Right cardiac atrium (tissue), 5 donors: ENCODE measurements at regions of chr3 and their contacts with region 1.

Region 1: GRCh38 chr3:115147329-115148141 is 447 bp upstream of the ZBTB20 start:
- DNase-seq: peak; percentile 98 to 99 (median 99)
- ATAC-seq: peak; percentile 95 to 96
- H3K4me3 ChIP-seq: peak overlapping the region; percentile 97
- H3K27ac ChIP-seq: peak overlapping the region; percentile 83
- H3K4me1 ChIP-seq: no peaks in the 10 kb centered on the region
- H3K27me3 ChIP-seq: no peaks in the 10 kb centered on the region

Region 2: GRCh38 chr3:115092220-115092791 is 55.2 kb before region 1 on chr3:
- intact Hi-C with region 1: loop called in 3 of 4 experiments (anchors 5 to 10 kb)
- DNase-seq: peak; percentile 60 to 83 (median 80)
- ATAC-seq: peak; percentile 98 to 99
- H3K4me3 ChIP-seq: no peak overlapping the region
- H3K27ac ChIP-seq: peak overlapping the region; percentile 35
- H3K4me1 ChIP-seq: peaks cover 2% of the 10 kb centered on the region
- H3K27me3 ChIP-seq: no peaks in the 10 kb centered on the region

Region 3: DNA sequence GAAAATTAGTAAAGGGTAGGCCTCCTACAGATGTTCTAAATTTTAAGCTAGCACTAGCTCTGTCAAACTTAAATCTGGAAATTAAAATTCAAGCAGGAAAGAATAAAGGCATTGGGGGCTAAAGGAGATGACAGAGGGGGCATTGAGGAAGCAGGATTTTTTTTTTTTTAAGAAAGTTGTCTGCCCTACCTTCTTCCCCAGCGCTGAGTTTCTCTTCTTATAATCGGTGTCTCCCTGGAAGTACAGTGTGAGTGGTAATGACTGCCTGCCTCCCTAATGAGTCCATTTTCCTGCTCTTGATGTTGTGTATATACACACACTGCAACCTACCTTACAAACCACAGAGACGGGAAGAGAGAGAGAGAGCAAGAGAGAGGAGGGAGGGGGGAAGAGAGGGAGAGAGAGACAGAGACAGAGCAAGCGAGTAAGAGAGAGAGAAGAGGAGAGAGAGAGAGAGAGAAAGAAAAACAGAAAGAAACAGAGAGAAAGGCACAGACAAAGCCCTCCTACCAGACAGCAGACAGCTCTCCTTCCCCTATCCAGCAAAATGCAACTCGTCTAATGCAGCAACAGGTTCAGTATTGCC is 47.5 kb before region 1 on chr3:
- intact Hi-C with region 1: loop called in 3 of 4 experiments (anchors 5 to 10 kb)
- DNase-seq: no peak
- ATAC-seq: peak; percentile 90 to 94
- H3K4me3 ChIP-seq: peak overlapping the region; percentile 75
- H3K27ac ChIP-seq: peak overlapping the region; percentile 94
- H3K4me1 ChIP-seq: peaks cover 2% of the 10 kb centered on the region
- H3K27me3 ChIP-seq: no peaks in the 10 kb centered on the region

Region 4: DNA sequence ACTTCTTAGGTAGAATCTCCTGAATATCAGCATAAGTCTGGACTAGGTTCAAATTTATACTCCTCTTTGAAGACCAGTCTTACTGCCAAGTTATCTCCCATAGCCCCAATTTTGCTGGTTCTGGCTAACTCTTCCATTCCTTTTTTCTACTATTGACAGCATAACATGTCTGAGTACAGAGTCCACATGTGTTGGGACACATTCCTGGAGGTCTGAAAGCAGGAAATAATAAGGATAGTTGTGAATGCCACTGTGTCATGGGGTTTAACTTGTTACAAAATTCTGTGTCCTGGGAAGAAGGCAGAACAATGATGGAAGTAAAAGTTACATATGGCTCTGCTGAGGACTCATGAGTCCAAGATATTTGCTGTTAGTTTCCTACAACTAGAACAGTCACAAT is 56.9 kb after region 1 on chr3:
- intact Hi-C with region 1: no loop called
- DNase-seq: no peak
- ATAC-seq: no peak
- H3K4me3 ChIP-seq: no peak overlapping the region
- H3K27ac ChIP-seq: no peak overlapping the region
- H3K4me1 ChIP-seq: no peaks in the 10 kb centered on the region
- H3K27me3 ChIP-seq: no peaks in the 10 kb centered on the region